Kidney (tissue), 22 donors: ENCODE measurements at regions of chr6 and their contacts with region 1.

Region 1: GRCh38 chr6:127539272-127539671 is 20.1 kb upstream of the MTCL3 start:
- DNase-seq: peak in 1 of 5 donors; percentile 35
- H3K4me3 ChIP-seq: no peak overlapping the region
- H3K27ac ChIP-seq: no peak overlapping the region
- H3K4me1 ChIP-seq: no peaks in the 10 kb centered on the region
- H3K27me3 ChIP-seq: no peaks in the 10 kb centered on the region
- CTCF ChIP-seq: peak; percentile 22

Region 2: DNA sequence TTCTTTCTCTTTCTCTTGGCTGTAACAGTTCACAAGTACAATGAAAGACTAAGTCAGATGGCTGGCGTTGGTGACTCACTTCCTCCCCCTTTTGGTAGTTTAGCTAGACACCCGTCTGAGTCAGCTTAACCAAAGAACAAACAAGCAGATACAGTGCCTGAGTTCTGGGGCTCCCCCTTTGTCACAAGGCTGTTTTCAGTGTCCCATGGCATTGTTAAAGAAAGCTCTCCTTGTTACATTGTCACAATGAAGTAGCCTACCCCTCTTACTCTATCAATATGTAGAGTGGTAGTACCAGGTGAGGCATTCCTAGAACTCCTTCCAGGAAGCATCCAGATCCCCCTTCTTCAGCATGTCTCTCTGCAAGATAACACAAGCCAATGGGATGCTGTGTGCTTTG is 118.7 kb before region 1 on chr6:
- intact Hi-C with region 1: no loop called
- DNase-seq: peak in 3 of 5 donors; percentile 39 to 73 (median 62)
- H3K4me3 ChIP-seq: no peak overlapping the region
- H3K27ac ChIP-seq: no peak overlapping the region
- H3K4me1 ChIP-seq: no peaks in the 10 kb centered on the region
- H3K27me3 ChIP-seq: no peaks in the 10 kb centered on the region
- CTCF ChIP-seq: peak; percentile 68

Region 3: GRCh38 chr6:127464881-127465459 is 74.3 kb before region 1 on chr6:
- intact Hi-C with region 1: loop called (anchors 10 kb)
- DNase-seq: peak in 4 of 5 donors; percentile 57 to 79 (median 60)
- H3K4me3 ChIP-seq: no peak overlapping the region
- H3K27ac ChIP-seq: no peak overlapping the region
- H3K4me1 ChIP-seq: no peaks in the 10 kb centered on the region
- H3K27me3 ChIP-seq: no peaks in the 10 kb centered on the region
- CTCF ChIP-seq: peak; percentile 64